Activated CD4-positive, alpha-beta T cell treated with anti-CD3 and anti-CD28 coated beads for 36 hours (primary cell): ENCODE measurements at regions of chr7 and their contacts with region 1.

Region 1: GRCh38 chr7:100428967-100429636 is 529 bp upstream of the MEPCE start:
- DNase-seq: peak; percentile 100
- ATAC-seq: peak; percentile 70
- H3K4me3 Mint-ChIP-seq: peak overlapping the region; percentile 88
- H3K27ac Mint-ChIP-seq: peak overlapping the region; percentile 100
- H3K4me1 Mint-ChIP-seq: peaks cover 43% of the 10 kb centered on the region
- H3K27me3 Mint-ChIP-seq: no peaks in the 10 kb centered on the region

Region 2: DNA sequence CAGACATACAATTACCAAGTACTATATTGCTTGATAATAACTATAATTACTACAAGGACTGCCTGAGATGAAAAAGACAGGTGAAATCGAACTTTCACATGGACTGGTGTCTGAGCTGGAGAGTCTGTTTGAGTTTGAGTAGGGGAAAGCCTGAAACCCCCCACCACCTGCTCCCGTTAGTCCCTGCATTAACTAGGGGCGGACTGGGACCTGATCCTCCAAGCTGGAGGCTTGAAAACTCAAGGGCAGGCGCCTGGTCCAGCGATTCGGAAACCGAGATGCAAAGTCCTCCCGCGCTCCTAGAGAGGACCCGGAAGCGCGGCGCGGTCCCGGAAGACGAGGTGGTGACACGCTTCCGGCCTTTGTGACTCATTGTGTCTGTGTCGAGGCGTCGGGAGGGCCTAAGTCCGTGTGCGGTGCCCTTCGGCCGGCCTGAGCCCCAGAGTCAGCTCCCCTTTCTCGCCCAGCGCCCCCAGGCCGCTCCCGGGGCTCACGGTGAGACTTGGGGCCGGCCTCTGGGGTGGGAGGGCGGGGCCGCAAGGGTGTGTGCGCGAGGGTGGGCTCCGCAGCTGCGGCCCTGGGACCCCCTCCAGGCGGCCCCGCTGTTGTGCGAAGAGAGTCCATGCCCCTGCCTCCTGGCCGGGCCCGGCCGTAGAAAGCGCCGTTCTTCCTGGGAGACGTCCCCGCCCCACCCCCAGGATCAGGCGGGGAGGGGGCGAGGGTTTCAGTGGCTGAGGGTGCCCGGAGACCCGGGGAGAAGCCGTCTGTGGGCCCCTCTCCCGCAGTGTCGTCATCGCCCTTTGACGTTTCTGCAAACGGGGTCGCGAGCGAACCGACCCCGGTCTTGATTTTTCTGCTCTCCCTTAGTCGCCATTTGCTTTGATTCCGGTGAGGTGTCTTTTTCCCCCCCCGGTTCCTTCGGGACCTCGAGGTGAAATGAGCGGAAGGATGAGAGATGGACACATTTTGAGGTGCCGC is 413.6 kb before region 1 on chr7 and contains the start of gene ZKSCAN1:
- CTCF ChIA-PET with region 1: no interaction called
- POLR2A ChIA-PET with region 1: no interaction called
- intact Hi-C with region 1: loop called in 1 of 2 experiments (anchors 1 kb)
- DNase-seq: peak; percentile 92
- ATAC-seq: peak; percentile 87
- H3K4me3 Mint-ChIP-seq: peak within 1 kb of the TSS; percentile 94
- H3K27ac Mint-ChIP-seq: peak within 1 kb of the TSS; percentile 96
- H3K4me1 Mint-ChIP-seq: peaks cover 53% of the 10 kb centered on the region
- H3K27me3 Mint-ChIP-seq: no peaks in the 10 kb centered on the region
- total RNA-seq, gene ZKSCAN1: 45.2 to 62.9 TPM

Region 3: GRCh38 chr7:100119062-100119700 is 309.9 kb before region 1 on chr7 and contains the starts of genes CNPY4 and TAF6:
- CTCF ChIA-PET with region 1: no interaction called
- POLR2A ChIA-PET with region 1: no interaction called
- intact Hi-C with region 1: loop called in 1 of 2 experiments (anchors 1 kb)
- DNase-seq: peak; percentile 97
- ATAC-seq: peak; percentile 68
- H3K4me3 Mint-ChIP-seq: peak within 1 kb of the TSS; percentile 86
- H3K27ac Mint-ChIP-seq: peak within 1 kb of the TSS; percentile 94
- H3K4me1 Mint-ChIP-seq: peaks cover 19% of the 10 kb centered on the region
- H3K27me3 Mint-ChIP-seq: no peaks in the 10 kb centered on the region
- total RNA-seq, gene CNPY4: 11.0 to 14.0 TPM
- total RNA-seq, gene TAF6: 54.3 to 59.5 TPM

Region 4: DNA sequence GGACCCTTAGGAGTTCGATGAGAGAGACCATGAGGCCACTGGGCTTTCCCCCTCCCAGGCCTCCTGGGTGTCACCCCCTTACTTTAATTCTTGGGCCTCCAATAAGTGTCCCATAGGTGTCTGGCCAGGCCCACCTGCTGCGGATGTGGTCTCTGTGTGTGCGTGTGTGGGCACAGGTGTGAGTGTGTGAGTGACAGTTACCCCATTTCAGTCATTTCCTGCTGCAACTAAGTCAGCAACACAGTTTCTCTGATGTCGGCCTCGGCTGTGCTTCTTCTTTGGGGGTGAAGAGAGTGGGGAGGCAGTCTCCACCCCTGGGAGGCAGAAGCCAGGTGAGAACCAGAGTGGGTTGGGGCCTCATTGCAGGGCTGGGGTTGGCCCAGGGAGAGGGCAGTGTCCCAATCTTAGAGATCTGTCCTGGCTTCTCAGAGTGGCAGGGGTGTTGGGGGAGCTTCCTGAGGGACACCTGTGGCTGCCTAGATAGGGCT is 207.8 kb before region 1 on chr7:
- CTCF ChIA-PET with region 1: no interaction called
- POLR2A ChIA-PET with region 1: no interaction called
- intact Hi-C with region 1: loop called in 1 of 2 experiments (anchors 2 kb)
- DNase-seq: peak; percentile 81
- ATAC-seq: peak; percentile 57
- H3K4me3 Mint-ChIP-seq: peak overlapping the region; percentile 96
- H3K27ac Mint-ChIP-seq: peak overlapping the region; percentile 90
- H3K4me1 Mint-ChIP-seq: peaks cover 47% of the 10 kb centered on the region
- H3K27me3 Mint-ChIP-seq: no peaks in the 10 kb centered on the region

Region 5: DNA sequence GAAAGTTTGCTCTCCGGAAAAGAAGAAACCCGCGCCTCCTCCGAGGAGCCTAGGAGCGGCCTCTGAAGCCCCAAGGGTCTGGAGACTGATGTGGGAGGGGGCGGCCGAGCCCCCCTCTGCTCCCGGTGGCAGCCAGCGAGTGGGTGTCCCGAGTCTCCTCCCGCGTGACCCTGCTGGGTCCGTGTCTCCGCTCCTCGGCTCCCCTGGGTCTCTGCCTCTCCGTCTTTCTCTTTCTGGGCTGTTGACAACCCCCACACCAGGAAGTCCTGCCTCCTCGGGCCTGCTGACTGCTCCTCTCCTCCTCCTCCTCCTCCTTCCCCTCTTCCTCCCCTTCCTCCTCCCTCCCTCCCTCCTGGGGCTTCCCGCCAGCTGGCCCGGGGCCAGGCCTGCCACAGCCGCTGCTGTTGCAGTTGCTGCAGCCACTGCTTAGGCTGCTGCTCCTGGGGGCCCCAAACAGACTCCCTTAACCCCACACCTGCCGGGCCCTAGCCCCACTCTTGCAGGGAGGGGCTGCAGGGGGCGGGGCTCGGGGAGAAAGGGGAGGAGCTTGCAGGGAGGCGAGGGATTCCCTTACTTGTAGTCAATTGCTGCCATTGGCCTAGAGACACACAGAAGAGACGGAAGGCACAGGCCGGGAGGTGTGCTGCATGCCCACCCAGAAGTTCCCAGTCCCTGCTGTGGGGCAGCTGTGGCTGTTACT is 50.0 kb after region 1 on chr7 and contains the start of gene TSC22D4:
- CTCF ChIA-PET with region 1: interaction called, 5 read pairs
- POLR2A ChIA-PET with region 1: no interaction called
- intact Hi-C with region 1: loop called in 1 of 2 experiments (anchors 2 kb)
- DNase-seq: peak; percentile 96
- ATAC-seq: peak; percentile 79
- H3K4me3 Mint-ChIP-seq: peak within 1 kb of the TSS; percentile 92
- H3K27ac Mint-ChIP-seq: peak within 1 kb of the TSS; percentile 94
- H3K4me1 Mint-ChIP-seq: peaks cover 41% of the 10 kb centered on the region
- H3K27me3 Mint-ChIP-seq: no peaks in the 10 kb centered on the region
- total RNA-seq, gene TSC22D4: 78.5 to 85.7 TPM

Region 6: GRCh38 chr7:100611974-100612729 is 183.1 kb after region 1 on chr7 and contains the start of gene MOSPD3:
- CTCF ChIA-PET with region 1: no interaction called
- POLR2A ChIA-PET with region 1: interaction called, 3 read pairs
- intact Hi-C with region 1: loop called in 1 of 2 experiments (anchors 1 kb)
- DNase-seq: peak; percentile 99
- ATAC-seq: peak; percentile 94
- H3K4me3 Mint-ChIP-seq: peak within 1 kb of the TSS; percentile 83
- H3K27ac Mint-ChIP-seq: peak within 1 kb of the TSS; percentile 100
- H3K4me1 Mint-ChIP-seq: peaks cover 17% of the 10 kb centered on the region
- H3K27me3 Mint-ChIP-seq: no peaks in the 10 kb centered on the region
- total RNA-seq, gene MOSPD3: 14.4 to 19.9 TPM

Region 7: GRCh38 chr7:100874577-100875355 is 445.7 kb after region 1 on chr7 and contains the start of gene SRRT:
- CTCF ChIA-PET with region 1: no interaction called
- POLR2A ChIA-PET with region 1: no interaction called
- intact Hi-C with region 1: loop called in 1 of 2 experiments (anchors 1 kb)
- DNase-seq: peak; percentile 99
- ATAC-seq: peak; percentile 95
- H3K4me3 Mint-ChIP-seq: peak within 1 kb of the TSS; percentile 99
- H3K27ac Mint-ChIP-seq: peak within 1 kb of the TSS; percentile 99
- H3K4me1 Mint-ChIP-seq: peaks cover 45% of the 10 kb centered on the region
- H3K27me3 Mint-ChIP-seq: no peaks in the 10 kb centered on the region
- total RNA-seq, gene SRRT: 253 to 260 TPM